AG04449 (cell line): ENCODE measurements at regions of chr7 and their contacts with region 1.

Region 1: DNA sequence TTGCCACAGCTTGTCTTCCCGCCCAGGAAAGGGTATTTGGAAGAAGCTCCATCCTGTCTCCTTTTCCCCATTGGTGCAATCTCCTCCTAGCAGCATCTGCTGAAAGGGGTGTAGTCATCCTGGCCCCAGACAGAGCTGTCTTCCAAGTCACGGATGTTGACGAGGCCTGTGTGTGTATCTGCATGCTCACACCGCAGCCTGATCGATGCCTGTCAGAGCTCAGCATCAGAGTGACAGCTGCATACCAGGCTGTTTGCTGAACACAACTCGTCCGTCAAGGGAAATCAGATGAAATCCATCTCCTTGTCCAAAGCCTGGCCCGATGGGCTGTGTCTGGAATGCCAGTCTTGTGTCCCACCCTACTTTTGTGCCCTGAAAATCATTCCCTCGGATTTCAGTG is 21.2 kb upstream of the LRRC4 start:
- DNase-seq: no peak
- H3K4me3 ChIP-seq: no peak overlapping the region
- CTCF ChIP-seq: no peak

Region 2: GRCh38 chr7:128041203-128041602 is 11.2 kb before region 1 on chr7:
- CTCF ChIA-PET with region 1: interaction called, 10 read pairs
- POLR2A ChIA-PET with region 1: no interaction called
- DNase-seq: no peak
- H3K4me3 ChIP-seq: no peak overlapping the region
- CTCF ChIP-seq: no peak

Region 3: DNA sequence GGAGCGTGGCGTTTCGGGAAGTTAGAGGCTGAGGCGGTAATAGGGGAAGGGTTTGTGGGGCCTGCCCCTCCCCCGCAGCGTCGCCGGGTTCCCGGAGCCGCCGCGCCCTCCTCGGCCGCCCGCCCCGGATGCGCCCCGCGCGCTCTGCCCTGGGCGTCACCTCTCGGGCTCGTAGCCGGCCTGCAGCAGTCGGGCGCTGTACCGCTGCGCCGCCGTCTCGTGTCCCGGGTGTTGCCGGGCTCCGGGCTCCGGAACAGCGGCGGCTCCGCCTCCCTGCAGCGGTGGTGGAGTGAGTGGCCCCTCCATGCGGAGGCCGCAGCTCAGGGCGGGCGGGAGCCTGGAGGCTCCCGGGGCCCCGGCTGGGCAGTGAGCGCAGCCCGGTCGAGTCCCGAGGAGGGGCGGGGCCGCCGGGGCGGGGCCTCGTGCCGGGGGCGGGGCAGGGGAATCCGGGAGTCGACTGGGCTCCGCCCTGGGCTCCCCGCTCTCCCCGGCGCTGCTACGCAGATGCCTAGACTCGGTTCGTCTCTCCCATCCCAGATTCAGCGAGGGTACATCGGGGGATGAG is 357.3 kb after region 1 on chr7 and contains the start of gene IMPDH1:
- CTCF ChIA-PET with region 1: no interaction called
- POLR2A ChIA-PET with region 1: no interaction called
- DNase-seq: no peak
- H3K4me3 ChIP-seq: peak within 1 kb of the TSS; percentile 85
- CTCF ChIP-seq: no peak